Activated naive CD4-positive, alpha-beta T cell treated with anti-CD3 and anti-CD28 coated beads for 36 hours (primary cell): ENCODE measurements at regions of chr13 and their contacts with region 1.

Region 1: GRCh38 chr13:60329221-60329983 is 67.6 kb upstream of the TDRD3 start:
- DNase-seq: peak; percentile 51
- H3K4me3 Mint-ChIP-seq: no peak overlapping the region
- H3K27ac Mint-ChIP-seq: no peak overlapping the region
- H3K4me1 Mint-ChIP-seq: no peaks in the 10 kb centered on the region
- H3K27me3 Mint-ChIP-seq: no peaks in the 10 kb centered on the region

Region 2: GRCh38 chr13:59809564-59809963 is 519.8 kb before region 1 on chr13:
- CTCF ChIA-PET with region 1: no interaction called
- intact Hi-C with region 1: loop called (anchors 5 kb)
- DNase-seq: no peak
- H3K4me3 Mint-ChIP-seq: no peak overlapping the region
- H3K27ac Mint-ChIP-seq: no peak overlapping the region
- H3K4me1 Mint-ChIP-seq: peaks cover 2% of the 10 kb centered on the region
- H3K27me3 Mint-ChIP-seq: no peaks in the 10 kb centered on the region